ENCODE measurements at regions of chr17 and their contacts with region 1.

Region 1: DNA sequence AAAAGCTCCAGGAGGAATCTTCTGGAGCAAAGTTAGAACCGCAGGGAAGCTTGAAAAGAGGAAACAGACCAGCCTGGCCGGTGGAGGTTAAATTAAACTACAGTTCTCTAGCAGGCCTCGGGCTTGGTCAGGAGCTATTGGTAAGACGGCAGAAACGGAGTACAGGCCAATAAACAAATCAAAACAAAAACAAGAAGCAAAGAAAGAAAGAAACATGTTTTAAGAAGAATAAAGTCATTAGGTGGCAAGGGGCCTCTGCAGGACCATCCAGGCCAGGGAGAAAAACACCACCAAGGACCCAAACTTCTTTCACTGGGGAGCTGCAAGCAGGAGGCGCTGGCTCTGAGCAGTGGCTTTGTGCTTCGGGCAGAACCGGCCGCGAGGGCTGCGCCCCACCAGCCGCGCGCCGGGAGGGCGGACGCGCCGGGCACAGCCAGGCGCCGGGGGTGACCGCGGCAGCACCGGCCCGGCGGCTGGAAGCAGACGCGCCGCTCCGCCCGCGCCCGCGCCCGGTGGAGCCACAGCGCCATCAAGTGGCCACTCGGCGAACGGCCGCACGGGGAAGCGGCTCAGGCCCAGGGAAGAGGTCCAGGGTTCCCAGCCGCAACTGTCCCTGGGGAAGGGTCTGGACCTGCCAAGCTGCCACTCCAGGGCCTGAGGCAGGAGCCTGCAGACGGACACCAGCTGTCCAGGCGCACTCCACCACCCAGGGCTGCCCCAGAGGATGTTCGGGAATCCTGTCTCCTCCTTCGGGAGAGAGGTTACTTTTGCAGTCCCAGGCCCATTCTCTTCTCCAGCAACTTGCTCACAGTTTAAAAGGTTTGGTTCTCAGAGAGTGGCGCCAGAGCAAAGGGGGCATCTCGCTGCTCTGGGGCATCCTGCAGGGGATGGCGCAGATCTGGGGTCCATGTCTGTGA is 419.4 kb downstream of the SOX9 start:
- DNase-seq: peak; percentile 48
- H3K4me3 ChIP-seq: no peak overlapping the region
- H3K27ac ChIP-seq: peak overlapping the region in 1 of 2 donors; percentile 53
- H3K4me1 ChIP-seq: no peaks in the 10 kb centered on the region
- H3K27me3 ChIP-seq: no peaks in the 10 kb centered on the region
- CTCF ChIP-seq: peak; percentile 85 to 98 (median 91)
- POLR2A ChIP-seq: no peak

Region 2: GRCh38 chr17:70636517-70637133 is 1903.6 kb before region 1 on chr17:
- intact Hi-C with region 1: loop called (anchors 5 kb)
- DNase-seq: peak; percentile 13
- H3K4me3 ChIP-seq: no peak overlapping the region
- H3K27ac ChIP-seq: no peak overlapping the region
- H3K4me1 ChIP-seq: no peaks in the 10 kb centered on the region
- H3K27me3 ChIP-seq: no peaks in the 10 kb centered on the region
- CTCF ChIP-seq: peak; percentile 46 to 83 (median 73)
- POLR2A ChIP-seq: no peak

Region 3: DNA sequence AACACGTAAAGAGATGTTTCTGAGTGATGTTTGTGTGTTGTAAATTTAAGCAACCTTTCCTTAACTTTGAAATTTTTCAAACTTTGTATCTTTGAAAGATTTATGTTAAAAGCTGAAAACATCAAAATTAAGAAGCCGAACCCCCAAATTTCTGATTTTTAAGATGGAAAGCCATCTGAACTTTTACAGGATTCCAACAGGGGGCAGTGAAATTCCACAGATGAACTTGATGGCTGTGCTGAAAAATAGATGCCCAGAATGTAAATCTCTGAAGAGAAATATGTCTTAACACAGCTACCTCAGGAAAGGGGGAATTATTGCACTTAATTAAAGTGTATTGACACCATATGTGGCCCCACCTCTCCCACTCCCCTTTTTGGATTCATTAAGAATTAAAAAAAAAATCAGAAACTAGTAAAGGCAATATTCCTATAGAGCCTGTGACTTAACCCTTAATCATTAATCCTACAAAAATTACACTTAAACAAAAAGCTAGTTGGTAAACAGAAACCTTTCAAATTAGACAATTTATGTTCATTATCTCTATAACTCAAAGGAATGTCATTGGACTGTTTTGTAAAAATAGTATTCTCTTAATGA is 1773.0 kb before region 1 on chr17:
- intact Hi-C with region 1: loop called (anchors 2 kb)
- DNase-seq: no peak
- H3K4me3 ChIP-seq: no peak overlapping the region
- H3K27ac ChIP-seq: no peak overlapping the region
- H3K4me1 ChIP-seq: no peaks in the 10 kb centered on the region
- H3K27me3 ChIP-seq: no peaks in the 10 kb centered on the region
- CTCF ChIP-seq: peak; percentile 39 to 73 (median 52)
- POLR2A ChIP-seq: no peak

Region 4: DNA sequence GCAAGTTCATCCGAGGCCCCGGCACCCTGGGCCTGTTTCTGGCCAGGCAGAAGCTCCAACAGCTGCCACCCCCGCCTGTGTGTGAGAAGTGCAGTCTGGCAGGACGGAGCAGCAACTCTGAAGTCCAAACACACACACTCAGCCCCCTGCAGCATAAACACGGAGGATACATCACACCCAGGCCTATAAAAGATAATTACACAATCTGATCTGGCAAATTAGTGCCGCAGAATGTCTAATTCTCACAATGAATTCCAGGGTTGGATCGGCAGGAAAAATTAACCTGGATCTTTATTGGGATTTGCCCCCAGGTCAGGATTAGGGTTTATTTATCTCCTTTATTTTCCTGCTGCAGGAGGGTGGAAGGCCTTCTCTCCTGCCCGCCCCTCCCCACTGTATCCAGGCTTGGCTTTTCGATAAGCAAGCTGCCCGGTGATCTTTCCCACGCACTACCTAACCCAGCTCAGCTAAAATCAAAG is 108.1 kb before region 1 on chr17:
- intact Hi-C with region 1: no loop called
- DNase-seq: no peak
- H3K4me3 ChIP-seq: no peak overlapping the region
- H3K27ac ChIP-seq: peak overlapping the region; percentile 39 to 53
- H3K4me1 ChIP-seq: peaks cover 7% of the 10 kb centered on the region
- H3K27me3 ChIP-seq: no peaks in the 10 kb centered on the region
- CTCF ChIP-seq: no peak
- POLR2A ChIP-seq: no peak

Measured in prostate gland (tissue), 2 donors.